GM23248 (cell line): ENCODE measurements at regions of chrX and their contacts with region 1.

Region 1: DNA sequence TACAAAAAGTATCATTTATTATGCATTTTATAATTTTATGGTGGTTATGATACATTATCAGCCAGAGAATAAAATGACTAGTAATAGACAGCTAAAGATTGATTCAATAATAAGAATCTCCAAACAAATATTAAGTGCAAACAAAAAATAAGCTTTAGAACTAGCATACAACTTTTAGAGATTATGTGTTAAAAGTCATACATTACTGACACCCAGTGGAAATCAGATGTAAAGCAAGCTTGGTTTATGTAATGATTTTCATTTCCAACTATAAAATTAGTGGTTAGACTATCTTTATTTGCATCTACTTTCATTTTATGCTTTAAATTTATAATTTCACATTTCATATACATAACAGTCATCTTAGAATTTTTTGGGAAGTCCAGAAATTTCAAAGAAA is 57.7 kb downstream of the IL13RA2 start:
- DNase-seq: peak; percentile 38
- H3K4me3 ChIP-seq: no peak overlapping the region
- H3K27ac ChIP-seq: no peak overlapping the region
- H3K4me1 ChIP-seq: no peaks in the 10 kb centered on the region
- H3K27me3 ChIP-seq: no peaks in the 10 kb centered on the region

Region 2: GRCh38 chrX:114619874-114620273 is 339.9 kb before region 1 on chrX:
- in situ Hi-C with region 1: loop called (anchors 10 kb)
- DNase-seq: peak; percentile 4
- H3K4me3 ChIP-seq: no peak overlapping the region
- H3K27ac ChIP-seq: no peak overlapping the region
- H3K4me1 ChIP-seq: no peaks in the 10 kb centered on the region
- H3K27me3 ChIP-seq: no peaks in the 10 kb centered on the region

Region 3: DNA sequence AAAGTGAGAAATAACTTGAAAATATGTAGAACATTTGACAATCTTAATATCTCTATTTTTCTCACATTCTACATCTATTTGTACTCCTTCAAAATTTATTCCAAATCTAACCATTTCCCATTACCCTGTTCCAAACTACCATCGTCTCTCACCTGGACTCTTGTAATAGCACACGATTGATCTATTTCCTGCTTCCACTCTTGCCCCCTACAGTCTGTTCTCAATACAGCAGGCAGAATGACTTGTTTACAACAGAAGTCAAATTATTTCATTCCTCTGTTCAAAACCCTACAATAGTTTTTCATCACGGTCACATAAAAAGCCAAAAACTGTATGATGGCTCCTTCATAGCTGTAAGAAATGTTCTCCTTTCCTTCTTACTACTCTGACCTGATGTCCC is 308.7 kb after region 1 on chrX:
- in situ Hi-C with region 1: no loop called
- DNase-seq: peak; percentile 7
- H3K4me3 ChIP-seq: no peak overlapping the region
- H3K27ac ChIP-seq: no peak overlapping the region
- H3K4me1 ChIP-seq: no peaks in the 10 kb centered on the region
- H3K27me3 ChIP-seq: no peaks in the 10 kb centered on the region

Region 4: GRCh38 chrX:115344885-115345614 is 385.3 kb after region 1 on chrX:
- in situ Hi-C with region 1: no loop called
- DNase-seq: peak; percentile 93
- H3K4me3 ChIP-seq: no peak overlapping the region
- H3K27ac ChIP-seq: peak overlapping the region; percentile 95
- H3K4me1 ChIP-seq: peaks cover 16% of the 10 kb centered on the region
- H3K27me3 ChIP-seq: no peaks in the 10 kb centered on the region